ENCODE measurements at regions of chr12 and their contacts with region 1.

Region 1: DNA sequence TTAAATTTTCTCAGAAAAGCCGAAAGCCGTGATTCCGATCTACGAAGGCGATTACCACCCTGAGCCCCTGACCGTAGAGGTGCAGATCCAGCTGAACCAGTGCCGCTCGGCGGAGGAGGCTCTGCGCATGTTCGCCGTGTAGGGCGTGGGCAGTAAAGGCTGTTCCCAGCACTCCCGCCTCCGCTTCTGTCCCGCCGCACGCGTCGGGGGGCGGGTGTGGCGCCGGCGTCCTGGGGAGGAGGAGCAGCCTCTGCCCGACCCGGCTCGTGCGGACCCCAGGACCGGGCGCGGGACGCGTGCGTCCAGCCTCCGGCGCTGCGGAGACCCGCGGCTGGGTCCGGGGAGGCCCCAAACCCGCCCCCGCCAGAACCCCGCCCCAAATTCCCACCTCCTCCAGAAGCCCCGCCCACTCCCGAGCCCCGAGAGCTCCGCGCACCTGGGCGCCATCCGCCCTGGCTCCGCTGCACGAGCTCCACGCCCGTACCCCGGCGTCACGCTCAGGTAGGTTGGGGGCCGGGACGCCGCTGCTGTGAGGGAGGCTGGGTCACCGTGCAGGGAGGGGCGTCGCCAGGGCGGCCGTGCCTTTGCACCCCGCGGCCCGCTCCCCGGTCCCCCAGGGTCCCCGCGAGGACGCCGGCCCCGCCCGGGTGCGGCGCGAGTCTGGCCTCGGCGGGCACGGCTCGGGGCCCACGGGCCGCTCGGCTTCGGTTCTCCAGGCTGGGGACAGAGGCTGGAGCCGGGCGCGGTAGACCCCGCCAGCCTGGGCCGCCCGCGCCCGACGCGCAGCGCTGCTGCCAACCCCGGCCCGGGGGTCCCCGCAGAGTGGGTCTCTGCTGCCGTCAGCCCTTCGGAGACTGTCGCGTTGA is at the start of gene B3GNT4:
- DNase-seq: peak; percentile 71
- H3K4me3 ChIP-seq: peak within 1 kb of the TSS; percentile 46 to 74 (median 65)
- H3K27ac ChIP-seq: no peak within 1 kb of the TSS
- H3K4me1 ChIP-seq: peaks cover 15% of the 10 kb centered on the region
- H3K27me3 ChIP-seq: no peaks in the 10 kb centered on the region
- CTCF ChIP-seq: no peak
- total RNA-seq, gene B3GNT4: 0.67 to 2.7 TPM

Region 2: GRCh38 chr12:122148657-122149056 is 54.9 kb before region 1 on chr12:
- CTCF ChIA-PET with region 1: no interaction called
- dilution Hi-C with region 1: loop called (anchors 10 kb)
- in situ Hi-C with region 1: no loop called
- intact Hi-C with region 1: no loop called
- DNase-seq: no peak
- H3K4me3 ChIP-seq: no peak overlapping the region
- H3K27ac ChIP-seq: no peak overlapping the region
- H3K4me1 ChIP-seq: no peaks in the 10 kb centered on the region
- H3K27me3 ChIP-seq: no peaks in the 10 kb centered on the region
- CTCF ChIP-seq: no peak

Region 3: DNA sequence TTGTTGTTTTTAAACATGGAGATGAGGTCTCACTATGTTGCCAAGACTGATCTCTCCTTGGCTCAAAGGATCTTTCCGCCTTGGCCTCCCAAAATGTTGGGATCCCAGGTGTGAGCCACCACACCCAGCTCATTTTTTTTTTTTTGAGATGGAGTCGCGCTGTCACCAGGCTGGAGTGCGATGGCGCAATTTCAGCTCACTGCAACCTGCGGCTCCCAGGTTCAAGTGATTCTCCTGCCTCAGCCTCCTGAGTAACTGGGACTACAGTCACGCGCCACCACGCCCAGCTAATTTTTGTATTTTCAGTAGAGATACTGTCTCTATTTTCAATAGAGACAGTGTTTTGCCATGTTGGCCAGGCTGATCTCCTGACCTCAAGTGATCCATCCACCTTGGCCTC is 223.9 kb after region 1 on chr12:
- CTCF ChIA-PET with region 1: no interaction called
- dilution Hi-C with region 1: no loop called
- in situ Hi-C with region 1: no loop called
- intact Hi-C with region 1: no loop called
- DNase-seq: no peak
- H3K4me3 ChIP-seq: no peak overlapping the region
- H3K27ac ChIP-seq: no peak overlapping the region
- H3K4me1 ChIP-seq: peaks cover 8% of the 10 kb centered on the region
- H3K27me3 ChIP-seq: no peaks in the 10 kb centered on the region
- CTCF ChIP-seq: no peak

Measured in mammary epithelial cell (primary cell).